Posterior vena cava (tissue), 2 donors: ENCODE measurements at regions of chr16 and their contacts with region 1.

Region 1: DNA sequence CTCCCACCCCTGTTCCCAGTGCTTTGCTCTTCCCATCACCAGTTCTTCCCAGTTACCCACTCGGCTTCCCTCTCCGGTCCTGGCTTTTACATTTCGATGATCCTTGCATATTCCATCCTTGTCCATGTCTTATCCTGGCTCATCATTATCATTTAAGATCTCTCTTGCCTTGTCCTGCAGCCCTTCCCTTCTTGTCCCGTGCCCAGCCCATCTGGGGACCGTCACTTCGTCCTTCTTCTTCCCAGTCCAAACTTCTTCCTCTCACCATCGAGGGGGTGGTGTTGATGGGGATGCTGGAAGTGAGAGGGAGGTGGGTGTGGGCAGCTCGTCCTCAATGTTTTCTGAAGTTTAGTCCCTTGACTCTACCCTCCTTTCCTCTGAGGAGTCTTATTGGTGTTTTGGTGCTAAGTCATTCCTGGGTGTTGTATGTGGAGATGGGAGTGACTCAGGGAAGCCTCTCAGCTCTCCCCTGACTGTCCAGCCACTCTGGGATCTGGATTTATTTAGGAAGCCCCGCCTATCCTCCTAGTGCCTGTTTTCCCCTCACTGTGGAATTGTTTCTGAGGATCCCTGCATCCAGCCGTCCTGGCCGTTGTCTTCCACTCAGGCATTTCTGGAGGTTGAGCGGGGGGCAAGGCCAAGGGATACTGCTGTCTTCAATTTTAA is 975 bp downstream of the SNX29 start:
- DNase-seq: no peak

Region 2: GRCh38 chr16:11698271-11698689 is 279.2 kb before region 1 on chr16:
- intact Hi-C with region 1: no loop called
- DNase-seq: no peak

Region 3: DNA sequence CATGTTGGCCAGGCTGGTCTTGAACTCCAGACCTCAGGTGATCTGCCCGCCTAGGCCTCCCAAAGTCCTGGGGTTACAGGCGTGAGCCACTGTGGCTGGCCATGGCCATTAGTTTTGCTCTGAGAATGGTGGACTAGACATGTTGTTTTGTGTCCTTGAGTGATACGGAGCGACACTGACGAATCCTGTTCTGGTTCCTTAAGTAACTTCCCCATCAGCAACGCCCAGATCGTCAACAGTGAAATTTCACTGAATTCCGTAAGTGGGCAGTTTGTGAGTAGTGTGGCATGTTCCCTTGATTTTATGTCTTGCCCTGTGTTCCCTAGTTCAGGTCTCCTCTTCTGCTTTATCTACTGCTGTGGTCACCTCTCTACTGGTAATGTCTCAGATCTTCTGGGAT is 66.4 kb after region 1 on chr16:
- intact Hi-C with region 1: loop called in 1 of 2 experiments (anchors 2 kb)
- DNase-seq: no peak

Region 4: GRCh38 chr16:12067714-12068401 is 90.3 kb after region 1 on chr16:
- intact Hi-C with region 1: loop called in 1 of 2 experiments (anchors 10 kb)
- DNase-seq: peak; percentile 42